CD4-positive, alpha-beta T cell (primary cell): ENCODE measurements at regions of chr1 and their contacts with region 1.

Region 1: DNA sequence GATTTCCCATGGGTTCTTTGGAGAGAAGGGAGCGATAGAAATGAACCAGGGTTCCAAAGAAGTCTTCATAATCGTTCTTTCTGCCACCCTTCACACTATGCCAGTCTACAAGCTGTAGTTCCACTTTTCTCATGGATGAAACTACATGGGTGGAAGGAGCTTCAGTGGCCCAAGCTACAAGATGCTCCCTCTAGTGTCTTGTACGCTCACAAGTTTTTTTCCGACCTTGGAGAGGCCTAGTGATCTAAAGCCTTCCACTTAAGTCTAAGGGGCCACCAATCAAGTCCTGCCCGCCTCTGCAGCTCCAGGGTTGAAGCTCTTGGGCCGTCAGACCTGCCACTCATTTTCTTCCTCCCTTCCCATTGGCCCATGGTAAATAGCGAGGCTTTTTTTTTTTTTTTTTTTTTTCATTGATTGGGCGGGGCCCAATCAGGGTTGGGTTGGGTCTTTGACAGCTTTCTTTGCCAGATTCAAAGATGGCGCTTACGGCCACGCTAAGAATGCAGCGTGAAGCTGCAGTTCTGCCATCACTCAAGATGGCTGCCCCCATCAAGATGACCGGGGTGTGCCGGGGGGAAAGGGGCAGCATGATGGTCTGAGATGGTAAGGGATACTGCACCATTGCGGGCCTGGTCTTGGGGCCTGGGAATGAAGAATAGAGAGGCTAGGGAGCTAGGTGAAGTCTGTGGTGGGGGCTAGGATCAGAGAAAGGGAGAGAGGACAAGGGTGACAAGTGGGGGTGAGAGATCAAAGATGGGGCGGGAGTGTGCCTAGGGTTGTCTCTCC is at the start of gene TOMM40L:
- DNase-seq: peak; percentile 74 to 98 (median 82)
- ATAC-seq: peak; percentile 95
- H3K4me3 ChIP-seq: peak within 1 kb of the TSS; percentile 84
- H3K4me3 Mint-ChIP-seq: peak within 1 kb of the TSS; percentile 98
- H3K27ac ChIP-seq: peak within 1 kb of the TSS; percentile 5 to 52
- H3K27ac Mint-ChIP-seq: peak within 1 kb of the TSS; percentile 83
- H3K4me1 ChIP-seq: peaks cover 34% of the 10 kb centered on the region
- H3K4me1 Mint-ChIP-seq: peaks cover 39% of the 10 kb centered on the region
- H3K27me3 ChIP-seq: no peaks in the 10 kb centered on the region
- H3K27me3 Mint-ChIP-seq: no peaks in the 10 kb centered on the region
- CTCF ChIP-seq: peak; percentile 59
- total RNA-seq, gene TOMM40L: 3.2 to 4.1 TPM

Region 2: GRCh38 chr1:160925652-160926241 is 300.0 kb before region 1 on chr1:
- CTCF ChIA-PET with region 1: no interaction called
- POLR2A ChIA-PET with region 1: no interaction called
- intact Hi-C with region 1: no loop called
- DNase-seq: no peak
- ATAC-seq: no peak
- H3K4me3 ChIP-seq: no peak overlapping the region
- H3K4me3 Mint-ChIP-seq: no peak overlapping the region
- H3K27ac ChIP-seq: no peak overlapping the region
- H3K27ac Mint-ChIP-seq: no peak overlapping the region
- H3K4me1 ChIP-seq: no peaks in the 10 kb centered on the region
- H3K4me1 Mint-ChIP-seq: no peaks in the 10 kb centered on the region
- H3K27me3 ChIP-seq: peaks cover 0 to 2% of the 10 kb centered on the region in 2 experiments
- H3K27me3 Mint-ChIP-seq: peaks cover 7% of the 10 kb centered on the region
- CTCF ChIP-seq: no peak

Region 3: DNA sequence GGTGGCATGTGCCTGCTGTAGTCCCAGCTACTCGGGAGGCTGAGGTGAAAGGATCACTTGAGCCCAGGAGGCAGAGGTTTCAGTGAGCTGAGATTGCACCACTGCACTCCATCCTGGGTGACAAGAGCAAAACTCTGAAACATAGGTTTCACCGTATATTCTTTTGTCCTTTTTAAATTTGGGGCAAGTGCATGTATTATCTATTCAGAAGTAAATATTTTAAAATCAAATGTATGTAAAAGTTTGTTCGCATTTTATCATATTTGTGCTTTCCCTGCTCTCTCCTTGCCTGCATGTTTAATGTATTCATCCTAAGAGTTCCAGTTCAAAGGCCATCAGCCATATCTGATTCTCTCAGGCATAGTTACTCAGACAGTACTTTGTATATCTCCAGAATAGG is 79.9 kb before region 1 on chr1:
- CTCF ChIA-PET with region 1: no interaction called
- POLR2A ChIA-PET with region 1: no interaction called
- intact Hi-C with region 1: no loop called
- DNase-seq: no peak
- ATAC-seq: no peak
- H3K4me3 ChIP-seq: no peak overlapping the region
- H3K4me3 Mint-ChIP-seq: no peak overlapping the region
- H3K27ac ChIP-seq: no peak overlapping the region
- H3K27ac Mint-ChIP-seq: no peak overlapping the region
- H3K4me1 ChIP-seq: no peaks in the 10 kb centered on the region
- H3K4me1 Mint-ChIP-seq: no peaks in the 10 kb centered on the region
- H3K27me3 ChIP-seq: no peaks in the 10 kb centered on the region
- H3K27me3 Mint-ChIP-seq: no peaks in the 10 kb centered on the region
- CTCF ChIP-seq: no peak

Region 4: GRCh38 chr1:161177112-161177935 is 48.4 kb before region 1 on chr1 and contains the start of gene B4GALT3:
- CTCF ChIA-PET with region 1: interaction called, 16 read pairs
- POLR2A ChIA-PET with region 1: interaction called, 28 read pairs
- intact Hi-C with region 1: loop called in 1 of 2 experiments (anchors 5 kb)
- DNase-seq: peak; percentile 84 to 98 (median 93)
- ATAC-seq: peak; percentile 90
- H3K4me3 ChIP-seq: peak within 1 kb of the TSS; percentile 77
- H3K4me3 Mint-ChIP-seq: peak within 1 kb of the TSS; percentile 100
- H3K27ac ChIP-seq: peak within 1 kb of the TSS; percentile 82 to 89
- H3K27ac Mint-ChIP-seq: peak within 1 kb of the TSS; percentile 97
- H3K4me1 ChIP-seq: peaks cover 76% of the 10 kb centered on the region
- H3K4me1 Mint-ChIP-seq: peaks cover 72% of the 10 kb centered on the region
- H3K27me3 ChIP-seq: no peaks in the 10 kb centered on the region
- H3K27me3 Mint-ChIP-seq: no peaks in the 10 kb centered on the region
- CTCF ChIP-seq: no peak
- total RNA-seq, gene B4GALT3: 40.8 to 44.3 TPM

Region 5: DNA sequence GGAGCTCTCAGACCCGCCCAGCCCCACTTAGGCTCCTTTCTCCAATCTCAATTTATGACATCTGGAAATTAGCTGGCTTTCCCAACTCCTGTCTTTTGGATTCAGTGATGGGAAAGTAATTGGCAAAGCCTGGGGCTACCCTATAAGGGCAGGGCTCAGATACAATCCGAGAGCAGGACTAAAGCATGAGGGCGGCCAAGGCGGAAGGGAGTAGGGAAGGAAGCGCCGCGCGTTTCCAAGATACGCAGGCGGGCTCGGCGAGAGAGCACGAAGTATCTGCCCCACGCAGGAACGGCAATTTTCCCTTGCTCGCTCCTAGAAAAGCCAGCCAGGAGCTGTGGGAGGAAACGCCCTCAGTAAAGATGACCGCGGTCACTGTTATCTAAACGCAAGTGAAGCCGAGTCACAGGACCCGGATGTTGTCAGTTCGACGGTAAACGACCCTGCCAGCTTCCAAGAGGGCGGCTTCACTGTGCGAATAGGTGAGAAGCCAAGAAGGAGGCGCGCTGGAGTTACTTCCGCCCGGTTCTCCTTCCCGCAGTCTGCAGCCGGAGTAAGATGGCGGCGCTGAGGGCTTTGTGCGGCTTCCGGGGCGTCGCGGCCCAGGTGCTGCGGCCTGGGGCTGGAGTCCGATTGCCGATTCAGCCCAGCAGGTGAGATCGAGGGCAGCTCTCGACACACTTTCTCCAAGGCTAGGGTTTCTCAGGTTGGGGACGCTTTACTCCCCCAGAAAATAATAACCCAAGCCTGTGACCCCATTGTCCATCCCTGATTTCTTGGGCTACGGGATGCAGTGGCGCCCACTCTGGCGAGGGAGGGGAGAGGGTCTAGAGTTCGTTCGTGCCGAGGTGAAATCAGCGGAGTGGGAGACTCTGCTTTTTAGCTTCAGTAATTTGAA is 23.6 kb before region 1 on chr1 and contains the start of gene NDUFS2:
- CTCF ChIA-PET with region 1: interaction called, 43 read pairs
- POLR2A ChIA-PET with region 1: interaction called, 95 read pairs
- intact Hi-C with region 1: loop called in 1 of 2 experiments (anchors 2 kb)
- DNase-seq: peak; percentile 90 to 99 (median 94)
- ATAC-seq: peak; percentile 99
- H3K4me3 ChIP-seq: peak within 1 kb of the TSS; percentile 66
- H3K4me3 Mint-ChIP-seq: peak within 1 kb of the TSS; percentile 99
- H3K27ac ChIP-seq: peak within 1 kb of the TSS; percentile 85 to 86
- H3K27ac Mint-ChIP-seq: peak within 1 kb of the TSS; percentile 95
- H3K4me1 ChIP-seq: peaks cover 47% of the 10 kb centered on the region
- H3K4me1 Mint-ChIP-seq: peaks cover 66% of the 10 kb centered on the region
- H3K27me3 ChIP-seq: no peaks in the 10 kb centered on the region
- H3K27me3 Mint-ChIP-seq: no peaks in the 10 kb centered on the region
- CTCF ChIP-seq: no peak
- total RNA-seq, gene NDUFS2: 49.9 to 55.7 TPM

Region 6: DNA sequence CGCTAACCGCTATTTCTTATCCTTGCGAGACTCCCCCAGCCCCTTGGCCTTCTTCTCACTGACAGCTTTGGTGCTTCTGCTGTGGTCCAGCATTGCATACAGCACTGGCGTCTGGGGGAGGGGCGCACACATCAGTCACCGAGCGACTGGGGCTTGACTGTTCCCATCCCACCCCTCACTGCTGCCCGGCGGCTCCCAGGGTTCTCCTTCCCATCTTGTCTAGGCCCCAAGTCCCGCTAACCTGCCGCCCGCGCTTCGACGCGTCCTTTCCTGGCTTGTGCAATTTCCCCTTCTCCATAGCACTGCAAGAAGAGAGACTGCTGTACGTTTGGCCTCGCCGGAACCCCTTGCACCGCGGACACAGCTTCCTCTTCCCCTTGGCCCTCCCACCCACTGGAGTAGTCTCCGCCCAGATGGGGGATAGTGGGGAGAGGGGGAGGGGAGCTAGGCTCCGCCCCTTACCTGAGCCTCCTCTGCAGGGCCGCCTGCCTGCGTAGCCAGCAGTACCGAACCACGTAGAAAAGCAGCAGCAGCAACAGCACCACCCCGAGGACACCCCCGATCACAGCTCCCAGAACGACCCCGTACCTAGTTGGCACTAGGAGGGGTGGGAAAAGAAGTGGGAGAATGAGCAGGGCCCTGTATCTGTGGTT is 80.3 kb after region 1 on chr1:
- CTCF ChIA-PET with region 1: interaction called, 30 read pairs
- POLR2A ChIA-PET with region 1: interaction called, 33 read pairs
- intact Hi-C with region 1: loop called (anchors 1 to 2 kb)
- DNase-seq: peak; percentile 75 to 97 (median 88)
- ATAC-seq: peak; percentile 98
- H3K4me3 ChIP-seq: peak overlapping the region; percentile 92
- H3K4me3 Mint-ChIP-seq: peak overlapping the region; percentile 94
- H3K27ac ChIP-seq: peak overlapping the region; percentile 51 to 71
- H3K27ac Mint-ChIP-seq: peak overlapping the region; percentile 90
- H3K4me1 ChIP-seq: peaks cover 26% of the 10 kb centered on the region
- H3K4me1 Mint-ChIP-seq: peaks cover 44% of the 10 kb centered on the region
- H3K27me3 ChIP-seq: no peaks in the 10 kb centered on the region
- H3K27me3 Mint-ChIP-seq: no peaks in the 10 kb centered on the region
- CTCF ChIP-seq: peak; percentile 59

Region 7: DNA sequence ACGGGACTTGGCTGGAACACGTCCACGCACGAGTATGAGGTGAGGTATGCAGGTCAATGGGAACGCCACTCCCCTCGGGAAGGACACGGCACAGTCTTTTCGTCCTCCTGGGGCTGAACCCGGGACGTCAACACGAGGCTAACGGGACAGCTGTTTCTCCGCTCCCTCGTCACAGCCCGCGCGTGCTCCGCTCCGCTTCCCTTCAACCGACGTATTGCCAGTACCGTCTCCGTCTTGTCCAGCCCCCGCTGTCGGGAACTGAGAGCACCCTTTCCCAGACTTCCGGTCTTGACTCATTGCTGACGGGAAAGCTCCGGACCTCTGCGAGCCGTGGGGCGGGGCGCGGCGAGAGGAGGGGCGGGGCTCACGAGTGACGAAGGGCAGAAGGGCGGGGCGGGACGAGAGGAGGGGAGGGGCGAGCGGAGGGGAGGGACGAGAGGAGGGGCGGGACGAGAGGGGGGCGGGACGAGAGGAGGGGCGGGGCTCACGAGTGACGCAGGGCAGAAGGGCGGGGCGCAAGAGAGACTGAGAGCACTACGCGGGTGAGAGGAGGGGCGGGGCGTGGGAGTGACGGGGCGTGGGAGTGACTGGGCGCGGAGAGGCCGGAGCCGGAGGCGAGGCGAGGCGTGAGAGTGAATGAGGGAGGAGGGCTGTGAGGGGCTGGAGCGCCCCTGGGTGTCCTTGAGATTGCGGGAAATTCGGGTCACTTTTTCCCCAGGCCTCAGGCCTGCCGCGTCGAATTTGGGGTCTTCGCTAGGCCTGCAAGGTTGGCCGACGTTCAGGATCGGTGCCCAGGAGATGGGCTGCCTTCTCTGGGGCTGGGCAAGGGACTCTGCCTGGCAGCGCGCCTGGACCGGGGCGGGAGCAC is 164.2 kb after region 1 on chr1:
- CTCF ChIA-PET with region 1: no interaction called
- POLR2A ChIA-PET with region 1: interaction called, 21 read pairs
- intact Hi-C with region 1: no loop called
- DNase-seq: peak; percentile 90 to 98 (median 96)
- ATAC-seq: peak; percentile 86
- H3K4me3 ChIP-seq: peak overlapping the region; percentile 92
- H3K4me3 Mint-ChIP-seq: peak overlapping the region; percentile 92
- H3K27ac ChIP-seq: peak overlapping the region; percentile 70 to 90
- H3K27ac Mint-ChIP-seq: peak overlapping the region; percentile 97
- H3K4me1 ChIP-seq: peaks cover 25% of the 10 kb centered on the region
- H3K4me1 Mint-ChIP-seq: peaks cover 45% of the 10 kb centered on the region
- H3K27me3 ChIP-seq: no peaks in the 10 kb centered on the region
- H3K27me3 Mint-ChIP-seq: no peaks in the 10 kb centered on the region
- CTCF ChIP-seq: no peak